PC-3 (cell line): ENCODE measurements at regions of chr12 and their contacts with region 1.

Region 1: GRCh38 chr12:84785951-84786350 is 126.6 kb downstream of the SLC6A15 start:
- DNase-seq: no peak
- ATAC-seq: no peak
- H3K4me3 ChIP-seq: no peak overlapping the region
- H3K27ac ChIP-seq: no peak overlapping the region
- H3K4me1 ChIP-seq: no peaks in the 10 kb centered on the region
- H3K27me3 ChIP-seq: no peaks in the 10 kb centered on the region
- CTCF ChIP-seq: no peak

Region 2: GRCh38 chr12:84641940-84642545 is 143.9 kb before region 1 on chr12:
- CTCF ChIA-PET with region 1: no interaction called
- POLR2A ChIA-PET with region 1: no interaction called
- intact Hi-C with region 1: no loop called
- DNase-seq: no peak
- ATAC-seq: no peak
- H3K4me3 ChIP-seq: no peak overlapping the region
- H3K27ac ChIP-seq: no peak overlapping the region
- H3K4me1 ChIP-seq: no peaks in the 10 kb centered on the region
- H3K27me3 ChIP-seq: no peaks in the 10 kb centered on the region
- CTCF ChIP-seq: no peak

Region 3: DNA sequence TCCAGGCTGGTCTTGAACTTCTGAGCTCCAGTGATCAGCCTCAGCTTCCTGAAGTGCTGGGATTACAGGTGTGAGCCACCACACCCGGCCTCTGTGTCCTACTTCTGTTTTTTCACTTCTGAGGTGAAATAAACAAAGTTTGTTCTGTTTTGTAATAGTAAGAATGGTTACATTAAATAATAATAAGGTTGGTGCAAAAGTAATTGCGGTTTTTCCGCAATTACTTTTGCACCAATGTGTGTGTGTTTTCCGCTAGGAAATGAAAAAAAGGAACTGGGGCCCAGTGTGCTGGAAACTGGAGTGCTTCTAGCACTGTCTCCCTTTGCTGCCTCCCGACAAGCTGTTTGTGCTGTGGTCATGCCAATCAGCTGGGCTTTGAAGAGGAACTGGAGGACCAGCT is 1229.1 kb after region 1 on chr12:
- CTCF ChIA-PET with region 1: interaction called, 10 read pairs
- POLR2A ChIA-PET with region 1: no interaction called
- intact Hi-C with region 1: no loop called
- DNase-seq: no peak
- ATAC-seq: no peak
- H3K4me3 ChIP-seq: no peak overlapping the region
- H3K27ac ChIP-seq: no peak overlapping the region
- H3K4me1 ChIP-seq: no peaks in the 10 kb centered on the region
- H3K27me3 ChIP-seq: no peaks in the 10 kb centered on the region
- CTCF ChIP-seq: no peak